WTC11 (cell line): ENCODE measurements at regions of chr19 and their contacts with region 1.

Region 1: GRCh38 chr19:35098413-35099049 is 17.1 kb upstream of the FXYD3 start:
- DNase-seq: no peak
- ATAC-seq: no peak
- H3K4me3 Mint-ChIP-seq: no peak overlapping the region
- H3K27ac Mint-ChIP-seq: no peak overlapping the region
- H3K4me1 Mint-ChIP-seq: peaks cover 10% of the 10 kb centered on the region
- H3K27me3 Mint-ChIP-seq: no peaks in the 10 kb centered on the region
- CTCF ChIP-seq: no peak

Region 2: DNA sequence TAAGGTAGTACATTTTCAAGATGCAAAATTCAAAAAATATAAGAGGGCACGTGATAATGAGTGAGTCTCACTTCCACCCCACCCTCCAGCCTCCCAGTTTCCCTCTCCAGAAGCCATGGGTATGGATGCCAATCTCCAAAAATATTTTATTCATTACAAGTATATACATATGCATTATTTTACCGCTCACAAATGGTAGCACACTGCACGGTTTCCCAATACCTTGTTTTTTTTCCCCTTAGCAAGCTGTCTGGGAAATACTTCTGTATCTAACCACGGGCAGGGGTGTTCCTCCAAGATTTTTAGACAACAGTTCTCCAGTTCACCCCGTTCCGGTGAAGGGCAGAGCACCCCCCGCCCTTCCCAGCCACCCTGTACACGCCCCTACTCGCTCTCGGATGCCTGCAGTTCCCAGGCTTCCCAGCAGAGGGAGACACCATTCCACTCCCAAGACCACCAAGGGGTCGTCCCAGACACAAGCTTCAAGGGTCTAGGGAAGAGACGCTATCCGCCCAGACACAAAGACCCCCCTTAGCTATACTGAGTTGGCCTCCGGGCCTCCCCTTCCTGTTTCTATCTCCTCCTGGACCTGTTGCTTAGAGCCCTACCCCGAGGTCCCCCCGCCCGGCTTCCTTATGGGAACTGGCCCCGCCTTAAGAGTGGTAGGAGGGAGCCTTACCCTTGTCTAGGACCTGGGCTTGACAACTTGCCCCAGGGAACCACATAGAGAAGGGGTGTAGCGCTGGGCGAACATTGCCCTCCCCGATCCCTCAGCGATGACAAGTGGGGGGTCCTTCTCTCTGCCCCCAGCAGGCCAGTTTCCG is 16.0 kb after region 1 on chr19:
- CTCF ChIA-PET with region 1: interaction called, 14 read pairs
- POLR2A ChIA-PET with region 1: interaction called, 4 read pairs
- DNase-seq: peak; percentile 92
- ATAC-seq: peak; percentile 82
- H3K4me3 Mint-ChIP-seq: peak overlapping the region; percentile 65
- H3K27ac Mint-ChIP-seq: no peak overlapping the region
- H3K4me1 Mint-ChIP-seq: peaks cover 46% of the 10 kb centered on the region
- H3K27me3 Mint-ChIP-seq: peaks cover 3% of the 10 kb centered on the region
- CTCF ChIP-seq: peak; percentile 99